GM10248 (cell line): ENCODE measurements at regions of chr6 and their contacts with region 1.

Region 1: GRCh38 chr6:73520688-73521350 is at the start of gene EEF1A1:
- DNase-seq: peak; percentile 93
- CTCF ChIP-seq: no peak

Region 2: DNA sequence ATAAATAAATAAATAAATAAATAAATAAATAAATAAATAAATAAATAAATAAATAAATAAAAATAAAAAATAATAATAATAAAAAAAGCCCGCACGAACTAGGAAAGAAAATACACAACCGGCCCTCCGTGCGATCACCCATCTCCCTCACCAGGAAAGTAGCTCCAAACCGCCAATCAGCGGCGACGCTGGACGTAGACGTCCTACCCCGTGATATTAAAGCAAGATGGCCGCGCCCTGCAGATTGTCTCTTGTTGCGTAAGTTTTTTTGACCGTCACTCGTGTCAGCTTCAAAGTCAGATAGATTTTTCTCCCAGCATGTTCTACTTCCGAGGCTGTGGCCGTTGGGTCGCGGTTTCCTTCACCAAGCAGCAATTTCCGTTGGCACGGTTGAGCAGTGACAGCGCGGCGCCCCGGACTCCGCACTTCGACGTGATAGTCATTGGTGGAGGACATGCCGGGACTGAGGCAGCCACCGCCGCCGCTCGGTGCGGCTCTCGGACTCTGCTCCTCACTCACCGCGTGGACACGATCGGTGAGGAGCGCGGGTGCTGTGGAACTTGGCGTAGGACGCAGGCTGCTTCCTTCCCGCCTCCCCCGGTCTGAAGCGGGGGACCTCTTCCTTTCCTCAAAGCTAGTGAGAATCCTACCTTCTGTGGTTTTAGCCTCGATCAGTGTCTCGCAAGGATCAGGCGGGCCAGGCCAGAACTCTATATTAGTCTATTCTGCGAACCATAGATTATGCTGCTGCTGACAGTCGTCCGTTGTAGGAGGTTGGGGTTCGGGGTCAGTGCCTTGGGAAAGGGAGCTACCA is 59.1 kb before region 1 on chr6 and contains the start of gene MTO1:
- CTCF ChIA-PET with region 1: no interaction called
- POLR2A ChIA-PET with region 1: interaction called, 14 read pairs
- DNase-seq: peak; percentile 89
- CTCF ChIP-seq: no peak

Region 3: GRCh38 chr6:73508776-73509175 is 12.0 kb before region 1 on chr6:
- CTCF ChIA-PET with region 1: interaction called, 3 read pairs
- POLR2A ChIA-PET with region 1: interaction called, 23 read pairs
- DNase-seq: no peak
- CTCF ChIP-seq: no peak

Region 4: GRCh38 chr6:73560182-73560732 is 39.4 kb after region 1 on chr6:
- CTCF ChIA-PET with region 1: interaction called, 5 read pairs
- POLR2A ChIA-PET with region 1: interaction called, 10 read pairs
- DNase-seq: no peak
- CTCF ChIP-seq: no peak

Region 5: DNA sequence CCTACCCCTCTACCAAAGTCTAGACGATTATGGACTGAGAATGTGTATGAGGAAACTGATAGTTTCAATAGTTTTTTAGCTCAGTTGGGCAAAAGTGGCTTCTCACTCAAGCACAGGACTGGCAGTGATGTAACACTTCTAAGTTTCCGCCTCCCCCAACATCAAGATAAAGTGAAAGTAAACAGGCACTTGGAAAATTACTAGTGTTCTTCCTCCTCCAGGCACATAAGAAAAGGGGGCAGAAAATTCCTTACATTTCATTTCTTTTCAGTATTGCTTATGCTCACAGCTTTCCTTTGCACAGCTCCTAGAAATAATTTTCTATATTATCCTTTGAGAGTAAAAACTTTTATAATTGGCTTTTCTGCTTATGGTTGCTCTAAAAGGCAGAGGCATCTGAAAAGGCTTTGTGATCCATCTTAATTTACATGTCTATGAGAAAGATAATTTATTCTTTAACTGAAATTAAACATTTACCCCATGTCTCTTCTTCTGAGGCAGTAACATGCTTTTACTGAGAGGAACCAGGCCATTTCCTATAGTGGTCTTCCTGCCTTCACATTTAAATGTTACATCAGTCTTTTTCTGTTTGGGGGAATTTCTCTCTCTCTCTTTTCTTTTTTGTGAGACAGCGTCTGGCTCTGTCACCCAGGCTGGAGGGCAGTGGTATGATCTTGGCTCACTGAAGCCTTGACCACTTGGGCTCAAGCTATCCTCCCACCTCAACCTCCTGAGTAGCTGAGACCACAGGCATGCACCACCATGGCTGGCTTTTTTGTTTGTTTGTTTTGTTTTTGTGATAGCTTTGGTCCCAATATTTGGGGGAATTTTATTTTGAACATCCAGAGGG is 65.0 kb after region 1 on chr6:
- CTCF ChIA-PET with region 1: interaction called, 12 read pairs
- POLR2A ChIA-PET with region 1: interaction called, 23 read pairs
- DNase-seq: peak; percentile 62
- CTCF ChIP-seq: no peak

Region 6: GRCh38 chr6:73644941-73645591 is 124.2 kb after region 1 on chr6:
- CTCF ChIA-PET with region 1: interaction called, 3 read pairs
- POLR2A ChIA-PET with region 1: interaction called, 11 read pairs
- DNase-seq: no peak
- CTCF ChIP-seq: no peak

Region 7: DNA sequence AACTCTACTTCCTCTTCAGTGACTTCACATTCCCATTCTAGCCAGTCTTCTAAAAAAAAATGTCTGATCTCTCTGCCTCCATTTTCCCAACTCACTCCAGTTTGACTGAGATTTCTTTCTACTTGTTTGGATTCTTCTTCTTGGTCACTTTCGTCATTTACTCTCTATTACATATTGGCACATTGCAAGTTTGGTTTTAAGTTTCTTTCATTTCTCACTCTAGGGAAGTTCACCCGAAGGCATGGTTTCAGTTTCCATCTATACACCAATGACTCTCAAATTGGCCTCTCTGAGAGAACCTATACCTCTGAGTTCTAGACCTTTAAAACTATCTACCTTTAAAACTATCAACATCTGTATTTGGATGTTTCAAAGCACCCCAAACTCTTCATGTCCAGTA is 226.5 kb after region 1 on chr6:
- CTCF ChIA-PET with region 1: no interaction called
- POLR2A ChIA-PET with region 1: no interaction called
- DNase-seq: peak; percentile 52
- CTCF ChIP-seq: no peak